ENCODE measurements at regions of chr18 and their contacts with region 1.

Region 1: GRCh38 chr18:22921772-22922171 is 11.4 kb upstream of the RBBP8 start:
- DNase-seq: no peak
- ATAC-seq: no peak
- H3K4me3 Mint-ChIP-seq: no peak overlapping the region
- H3K27ac Mint-ChIP-seq: no peak overlapping the region
- H3K4me1 Mint-ChIP-seq: no peaks in the 10 kb centered on the region
- H3K27me3 Mint-ChIP-seq: no peaks in the 10 kb centered on the region
- CTCF ChIP-seq: no peak

Region 2: DNA sequence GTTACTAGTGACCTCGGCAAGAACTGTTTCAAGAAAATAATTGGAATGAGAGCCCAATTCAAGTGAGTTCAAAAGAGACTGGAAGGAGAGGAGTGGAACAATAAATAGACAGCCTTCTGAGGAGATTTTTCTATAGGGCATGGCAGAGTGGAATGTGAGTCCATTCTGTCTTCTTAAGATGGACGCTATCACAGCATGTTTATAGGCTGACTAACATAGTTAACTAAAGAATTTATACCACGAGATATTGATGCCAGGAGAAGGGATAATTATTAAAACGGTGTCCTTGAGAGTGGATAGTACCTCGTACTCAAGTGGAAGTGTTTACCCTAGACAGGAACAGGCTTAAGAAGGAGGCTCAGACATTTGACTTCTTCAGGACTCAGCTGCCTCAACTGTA is 132.2 kb before region 1 on chr18:
- CTCF ChIA-PET with region 1: no interaction called
- POLR2A ChIA-PET with region 1: no interaction called
- intact Hi-C with region 1: loop called (anchors 10 kb)
- DNase-seq: no peak
- ATAC-seq: no peak
- H3K4me3 Mint-ChIP-seq: no peak overlapping the region
- H3K27ac Mint-ChIP-seq: no peak overlapping the region
- H3K4me1 Mint-ChIP-seq: no peaks in the 10 kb centered on the region
- H3K27me3 Mint-ChIP-seq: peaks cover 13% of the 10 kb centered on the region
- CTCF ChIP-seq: no peak

Region 3: GRCh38 chr18:22964116-22964515 is 42.3 kb after region 1 on chr18:
- CTCF ChIA-PET with region 1: no interaction called
- POLR2A ChIA-PET with region 1: no interaction called
- intact Hi-C with region 1: no loop called
- DNase-seq: no peak
- ATAC-seq: no peak
- H3K4me3 Mint-ChIP-seq: no peak overlapping the region
- H3K27ac Mint-ChIP-seq: no peak overlapping the region
- H3K4me1 Mint-ChIP-seq: peaks cover 6% of the 10 kb centered on the region
- H3K27me3 Mint-ChIP-seq: no peaks in the 10 kb centered on the region
- CTCF ChIP-seq: no peak

Region 4: GRCh38 chr18:23307567-23308295 is 386.0 kb after region 1 on chr18:
- CTCF ChIA-PET with region 1: no interaction called
- POLR2A ChIA-PET with region 1: no interaction called
- intact Hi-C with region 1: no loop called
- DNase-seq: peak; percentile 59
- ATAC-seq: peak; percentile 65
- H3K4me3 Mint-ChIP-seq: no peak overlapping the region
- H3K27ac Mint-ChIP-seq: peak overlapping the region; percentile 66
- H3K4me1 Mint-ChIP-seq: peaks cover 30% of the 10 kb centered on the region
- H3K27me3 Mint-ChIP-seq: no peaks in the 10 kb centered on the region
- CTCF ChIP-seq: no peak